Sigmoid colon (tissue), 7 donors: ENCODE measurements at regions of chr11 and their contacts with region 1.

Region 1: GRCh38 chr11:88414981-88415391 is 77.5 kb upstream of the CTSC start:
- DNase-seq: no peak
- H3K4me3 ChIP-seq: no peak overlapping the region
- H3K27ac ChIP-seq: peak overlapping the region in 2 of 4 donors; percentile 10 to 46
- H3K4me1 ChIP-seq: peaks cover 0 to 19% (median 15%) of the 10 kb centered on the region in 4 donors
- H3K27me3 ChIP-seq: no peaks in the 10 kb centered on the region
- CTCF ChIP-seq: no peak
- EP300 ChIP-seq: no peak
- POLR2A ChIP-seq: no peak

Region 2: DNA sequence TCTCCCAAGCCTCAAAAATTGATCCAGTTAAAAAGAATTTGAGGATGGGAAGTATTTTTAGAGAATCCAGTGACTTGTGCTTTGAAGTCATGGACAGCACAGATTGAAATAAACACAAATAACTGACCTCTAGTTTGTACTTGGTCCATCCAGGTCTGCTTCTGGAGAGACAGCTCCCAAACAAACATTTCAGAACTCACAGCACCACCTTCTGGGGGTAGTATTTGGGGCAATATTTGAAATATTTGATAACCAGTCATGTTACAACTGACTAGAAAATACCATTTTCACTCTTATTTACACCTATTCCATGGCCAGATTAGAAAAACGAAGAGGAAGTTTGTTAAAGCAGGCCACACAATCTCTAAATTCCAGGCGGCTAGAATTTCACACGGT is 133.7 kb before region 1 on chr11:
- intact Hi-C with region 1: loop called (anchors 5 kb)
- DNase-seq: no peak
- H3K4me3 ChIP-seq: no peak overlapping the region
- H3K27ac ChIP-seq: no peak overlapping the region
- H3K4me1 ChIP-seq: peaks cover 0 to 45% (median 30%) of the 10 kb centered on the region in 4 donors
- H3K27me3 ChIP-seq: no peaks in the 10 kb centered on the region
- CTCF ChIP-seq: no peak
- EP300 ChIP-seq: no peak
- POLR2A ChIP-seq: no peak

Region 3: DNA sequence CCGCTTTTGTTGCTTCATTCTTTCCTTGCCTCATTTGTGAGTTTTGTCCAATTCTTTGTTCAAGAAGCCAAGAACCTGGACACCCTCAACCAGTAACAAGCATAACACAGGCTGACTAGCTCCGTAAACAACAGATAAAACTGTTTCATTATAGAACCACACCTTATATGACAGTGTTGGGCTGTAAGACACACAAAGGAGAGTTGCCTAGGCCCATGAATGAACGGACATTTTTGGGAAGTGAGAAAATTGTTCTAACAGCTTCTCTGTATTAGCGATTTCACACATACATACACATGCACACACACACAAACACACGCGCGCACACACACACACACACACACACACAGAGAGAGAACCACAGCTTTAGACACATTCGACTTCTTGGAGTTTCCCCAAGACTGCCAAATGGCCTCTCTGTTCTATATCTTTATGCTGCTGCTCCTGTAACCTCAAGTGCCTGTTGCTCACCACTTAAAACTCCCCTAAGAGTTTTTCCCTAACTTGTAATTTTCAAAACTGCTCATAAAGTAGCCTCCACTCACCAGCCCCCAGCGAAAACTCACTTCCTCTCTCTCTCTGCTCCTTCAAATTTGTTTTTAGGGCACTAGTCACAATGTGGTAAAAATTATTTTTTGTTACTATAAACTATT is 113.4 kb before region 1 on chr11:
- intact Hi-C with region 1: no loop called
- DNase-seq: no peak
- H3K4me3 ChIP-seq: no peak overlapping the region
- H3K27ac ChIP-seq: peak overlapping the region in 3 of 4 donors; percentile 77 to 83 (median 83)
- H3K4me1 ChIP-seq: peaks cover 0 to 66% (median 40%) of the 10 kb centered on the region in 4 donors
- H3K27me3 ChIP-seq: no peaks in the 10 kb centered on the region
- CTCF ChIP-seq: no peak
- EP300 ChIP-seq: peak; percentile 71 to 95 (median 86)
- POLR2A ChIP-seq: no peak